Aorta (tissue), 5 donors: ENCODE measurements at regions of chr2 and their contacts with region 1.

Region 1: GRCh38 chr2:71000780-71001591 is 6.3 kb upstream of the TEX261 start:
- DNase-seq: peak; percentile 82 to 91
- ATAC-seq: peak; percentile 88
- H3K4me3 ChIP-seq: no peak overlapping the region
- H3K27ac ChIP-seq: no peak overlapping the region
- H3K4me1 ChIP-seq: no peaks in the 10 kb centered on the region
- H3K27me3 ChIP-seq: no peaks in the 10 kb centered on the region

Region 2: GRCh38 chr2:70828914-70829824 is 171.8 kb before region 1 on chr2:
- intact Hi-C with region 1: no loop called
- DNase-seq: no peak
- ATAC-seq: no peak
- H3K4me3 ChIP-seq: no peak overlapping the region
- H3K27ac ChIP-seq: no peak overlapping the region
- H3K4me1 ChIP-seq: no peaks in the 10 kb centered on the region
- H3K27me3 ChIP-seq: no peaks in the 10 kb centered on the region

Region 3: GRCh38 chr2:70964596-70965386 is 36.2 kb before region 1 on chr2:
- intact Hi-C with region 1: loop called (anchors 2 to 5 kb)
- DNase-seq: peak; percentile 82 to 93
- ATAC-seq: peak; percentile 87
- H3K4me3 ChIP-seq: peak overlapping the region in 1 of 2 donors; percentile 47
- H3K27ac ChIP-seq: no peak overlapping the region
- H3K4me1 ChIP-seq: no peaks in the 10 kb centered on the region
- H3K27me3 ChIP-seq: no peaks in the 10 kb centered on the region